ENCODE measurements at regions of chr3 and their contacts with region 1.

Region 1: GRCh38 chr3:73459711-73460110 is 165.0 kb downstream of the PDZRN3 start:
- DNase-seq: no peak
- ATAC-seq: no peak

Region 2: DNA sequence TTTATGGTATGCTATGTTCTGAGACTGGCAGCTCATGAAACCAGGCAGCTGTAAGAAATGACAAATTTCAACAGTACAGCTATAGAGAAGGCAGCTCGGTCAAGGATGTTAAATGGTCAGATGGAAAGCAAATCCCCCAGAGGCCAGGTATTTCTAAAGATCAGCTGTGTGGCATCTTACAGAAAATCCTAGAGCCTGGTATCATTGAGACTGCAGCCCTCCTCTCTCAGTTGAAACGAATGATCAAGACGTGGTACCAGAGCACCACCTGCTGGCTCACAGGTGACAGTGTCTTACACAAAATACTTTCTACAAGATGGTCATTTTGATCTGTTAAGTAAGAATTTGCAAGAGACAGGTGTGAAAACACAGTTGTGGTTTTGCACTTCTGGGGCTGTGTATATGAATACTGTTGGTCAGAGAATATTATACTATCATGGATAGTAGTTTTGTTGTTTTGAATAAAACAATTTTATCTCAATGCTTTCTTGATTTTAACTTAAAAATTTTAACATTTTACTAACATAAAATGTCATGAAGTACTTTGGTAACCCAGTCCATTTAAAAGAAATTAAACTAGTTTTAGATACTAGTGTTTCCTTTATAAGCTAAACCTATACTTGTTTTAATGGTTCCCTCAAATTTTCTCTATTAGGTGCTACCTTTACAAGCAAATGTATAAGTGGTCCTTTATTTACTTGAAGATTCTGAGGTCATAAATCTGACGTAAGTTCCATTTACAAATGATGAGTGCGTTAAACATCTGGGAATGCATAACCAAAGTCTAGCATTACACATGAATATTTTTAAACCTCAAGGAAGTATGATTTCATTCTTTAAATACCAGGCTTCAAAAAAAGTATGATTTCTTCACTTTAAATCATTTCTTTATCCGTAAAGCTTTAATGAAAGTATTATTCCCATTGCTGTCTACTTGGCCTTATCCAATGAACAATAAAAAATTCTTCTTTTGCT is 43.2 kb after region 1 on chr3:
- intact Hi-C with region 1: loop called in 1 of 2 experiments (anchors 5 kb)
- DNase-seq: peak; percentile 79
- ATAC-seq: peak; percentile 66 to 81

Region 3: DNA sequence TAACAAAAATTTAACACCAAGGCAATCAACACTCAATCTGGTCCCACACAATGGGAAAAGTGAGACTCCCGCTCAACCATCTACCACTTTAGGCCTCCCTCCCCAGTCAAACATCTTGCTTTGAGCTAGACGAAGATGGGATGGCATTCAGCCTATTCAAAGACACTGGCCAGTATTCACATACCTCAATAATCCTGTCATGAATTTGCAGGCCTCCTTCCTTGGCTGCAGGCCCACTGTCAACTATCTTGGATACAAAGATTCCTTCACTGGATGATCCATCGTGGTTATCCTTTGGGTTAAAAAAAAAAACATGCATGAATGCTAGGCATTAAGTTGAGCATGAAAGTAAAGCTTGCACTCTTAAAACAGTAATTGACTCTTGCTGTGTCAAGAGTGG is 142.5 kb after region 1 on chr3:
- intact Hi-C with region 1: no loop called
- DNase-seq: no peak
- ATAC-seq: peak; percentile 41 to 57